Activated CD8-positive, alpha-beta T cell treated with anti-CD3 and anti-CD28 coated beads for 36 hours (primary cell): ENCODE measurements at regions of chr20 and their contacts with region 1.

Region 1: GRCh38 chr20:41411391-41411847 is 44.8 kb upstream of the EMILIN3 start:
- DNase-seq: no peak
- ATAC-seq: no peak
- H3K4me3 Mint-ChIP-seq: no peak overlapping the region
- H3K27ac Mint-ChIP-seq: no peak overlapping the region
- H3K4me1 Mint-ChIP-seq: peaks cover 13% of the 10 kb centered on the region
- H3K27me3 Mint-ChIP-seq: no peaks in the 10 kb centered on the region
- CTCF ChIP-seq: peak; percentile 47

Region 2: DNA sequence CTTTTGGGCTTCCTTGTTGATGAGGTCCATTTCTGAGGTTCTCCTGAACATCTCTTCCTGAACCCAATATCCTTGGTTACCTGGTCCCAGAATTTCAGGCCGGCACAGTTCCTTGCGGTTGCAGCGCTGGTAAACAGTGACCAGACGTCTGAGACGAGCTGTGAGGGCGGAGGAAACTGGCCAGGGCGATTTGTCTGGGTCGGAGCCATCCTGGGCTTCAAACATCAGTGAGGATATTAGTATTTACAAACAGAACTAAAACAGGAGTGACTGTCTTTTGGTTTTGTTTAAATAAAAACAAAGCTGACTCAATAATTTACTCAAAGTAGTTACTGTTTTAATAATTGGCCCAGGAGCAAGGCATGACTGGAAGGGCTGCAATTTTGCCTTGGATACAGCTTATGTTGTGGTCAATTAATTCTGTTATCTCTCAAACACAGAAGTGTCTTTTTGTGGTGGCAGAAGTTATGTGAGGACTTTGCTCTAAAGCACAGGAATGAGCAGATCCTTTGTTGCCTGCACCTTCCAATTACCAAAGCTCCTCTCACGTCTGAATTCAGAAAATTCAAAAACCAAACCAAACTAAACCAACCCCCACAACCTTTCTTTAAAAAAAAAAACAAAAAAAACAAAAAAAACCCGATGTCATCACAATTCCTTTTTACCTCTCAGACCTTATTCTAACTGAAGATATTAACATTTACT is 13.9 kb after region 1 on chr20:
- CTCF ChIA-PET with region 1: interaction called, 24 read pairs
- POLR2A ChIA-PET with region 1: no interaction called
- intact Hi-C with region 1: no loop called
- DNase-seq: no peak
- ATAC-seq: no peak
- H3K4me3 Mint-ChIP-seq: no peak overlapping the region
- H3K27ac Mint-ChIP-seq: no peak overlapping the region
- H3K4me1 Mint-ChIP-seq: peaks cover 18% of the 10 kb centered on the region
- H3K27me3 Mint-ChIP-seq: no peaks in the 10 kb centered on the region
- CTCF ChIP-seq: no peak

Region 3: DNA sequence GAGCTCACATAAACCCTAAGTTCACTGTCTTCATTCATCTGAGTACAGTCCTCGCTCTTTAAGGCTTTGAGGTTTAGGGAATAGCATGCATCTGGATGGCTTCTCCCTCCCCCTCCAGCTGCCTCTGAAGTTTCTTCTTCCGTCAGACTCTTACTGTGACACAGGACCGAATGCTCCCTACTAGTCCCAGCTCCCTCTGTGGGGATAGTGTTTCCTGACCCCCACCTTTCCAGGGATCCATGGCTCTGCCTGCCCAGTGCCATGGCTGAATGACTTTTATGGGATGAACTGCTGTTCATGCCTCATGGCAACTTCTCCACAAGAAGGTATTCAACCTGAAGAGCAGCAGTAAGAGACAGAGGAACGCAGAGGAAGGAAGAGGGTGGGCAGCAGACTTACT is 35.0 kb after region 1 on chr20:
- CTCF ChIA-PET with region 1: no interaction called
- POLR2A ChIA-PET with region 1: no interaction called
- intact Hi-C with region 1: no loop called
- DNase-seq: no peak
- ATAC-seq: no peak
- H3K4me3 Mint-ChIP-seq: no peak overlapping the region
- H3K27ac Mint-ChIP-seq: no peak overlapping the region
- H3K4me1 Mint-ChIP-seq: peaks cover 18% of the 10 kb centered on the region
- H3K27me3 Mint-ChIP-seq: no peaks in the 10 kb centered on the region
- CTCF ChIP-seq: no peak